PC-3 (cell line): ENCODE measurements at regions of chr3 and their contacts with region 1.

Region 1: GRCh38 chr3:48039487-48040190 is 23.4 kb upstream of the MAP4 start:
- DNase-seq: peak; percentile 66
- ATAC-seq: peak; percentile 63
- H3K4me3 ChIP-seq: no peak overlapping the region
- H3K27ac ChIP-seq: peak overlapping the region; percentile 21
- H3K4me1 ChIP-seq: peaks cover 28% of the 10 kb centered on the region
- H3K27me3 ChIP-seq: no peaks in the 10 kb centered on the region
- CTCF ChIP-seq: no peak

Region 2: GRCh38 chr3:47664519-47664918 is 375.1 kb before region 1 on chr3:
- CTCF ChIA-PET with region 1: no interaction called
- POLR2A ChIA-PET with region 1: no interaction called
- intact Hi-C with region 1: no loop called
- DNase-seq: peak; percentile 43
- ATAC-seq: no peak
- H3K4me3 ChIP-seq: no peak overlapping the region
- H3K27ac ChIP-seq: no peak overlapping the region
- H3K4me1 ChIP-seq: peaks cover 26% of the 10 kb centered on the region
- H3K27me3 ChIP-seq: no peaks in the 10 kb centered on the region
- CTCF ChIP-seq: peak; percentile 50; the same call in 1 of the 2 replicates

Region 3: GRCh38 chr3:48077815-48078214 is 38.2 kb after region 1 on chr3:
- CTCF ChIA-PET with region 1: no interaction called
- POLR2A ChIA-PET with region 1: no interaction called
- intact Hi-C with region 1: loop called (anchors 1 kb)
- DNase-seq: peak; percentile 25
- ATAC-seq: peak; percentile 42; the same call in 1 of the 2 replicates
- H3K4me3 ChIP-seq: no peak overlapping the region
- H3K27ac ChIP-seq: no peak overlapping the region
- H3K4me1 ChIP-seq: peaks cover 18% of the 10 kb centered on the region
- H3K27me3 ChIP-seq: no peaks in the 10 kb centered on the region
- CTCF ChIP-seq: no peak